A549 (cell line): ENCODE measurements at regions of chr20 and their contacts with region 1.

Region 1: GRCh38 chr20:62808211-62808865 is 3.7 kb downstream of the OGFR start:
- DNase-seq: peak; percentile 65 to 83
- ATAC-seq: peak; percentile 58 to 82; a peak in 4 of 6 replicates
- H3K4me3 ChIP-seq: no peak overlapping the region
- H3K27ac ChIP-seq: no peak overlapping the region
- H3K4me1 ChIP-seq: peaks cover 17% of the 10 kb centered on the region
- CTCF ChIP-seq: peak; percentile 85
- EP300 ChIP-seq: no peak
- POLR2A ChIP-seq: no peak
- RAD21 ChIP-seq: peak; percentile 69 to 73

Region 2: GRCh38 chr20:62668441-62669027 is 139.8 kb before region 1 on chr20:
- CTCF ChIA-PET with region 1: interaction called, 60 read pairs
- POLR2A ChIA-PET with region 1: no interaction called
- DNase-seq: peak; percentile 72 to 91
- ATAC-seq: peak; percentile 79 to 91
- H3K4me3 ChIP-seq: no peak overlapping the region
- H3K27ac ChIP-seq: no peak overlapping the region
- H3K4me1 ChIP-seq: no peaks in the 10 kb centered on the region
- CTCF ChIP-seq: peak; percentile 88
- EP300 ChIP-seq: no peak
- POLR2A ChIP-seq: no peak
- RAD21 ChIP-seq: peak; percentile 93 to 97

Region 3: DNA sequence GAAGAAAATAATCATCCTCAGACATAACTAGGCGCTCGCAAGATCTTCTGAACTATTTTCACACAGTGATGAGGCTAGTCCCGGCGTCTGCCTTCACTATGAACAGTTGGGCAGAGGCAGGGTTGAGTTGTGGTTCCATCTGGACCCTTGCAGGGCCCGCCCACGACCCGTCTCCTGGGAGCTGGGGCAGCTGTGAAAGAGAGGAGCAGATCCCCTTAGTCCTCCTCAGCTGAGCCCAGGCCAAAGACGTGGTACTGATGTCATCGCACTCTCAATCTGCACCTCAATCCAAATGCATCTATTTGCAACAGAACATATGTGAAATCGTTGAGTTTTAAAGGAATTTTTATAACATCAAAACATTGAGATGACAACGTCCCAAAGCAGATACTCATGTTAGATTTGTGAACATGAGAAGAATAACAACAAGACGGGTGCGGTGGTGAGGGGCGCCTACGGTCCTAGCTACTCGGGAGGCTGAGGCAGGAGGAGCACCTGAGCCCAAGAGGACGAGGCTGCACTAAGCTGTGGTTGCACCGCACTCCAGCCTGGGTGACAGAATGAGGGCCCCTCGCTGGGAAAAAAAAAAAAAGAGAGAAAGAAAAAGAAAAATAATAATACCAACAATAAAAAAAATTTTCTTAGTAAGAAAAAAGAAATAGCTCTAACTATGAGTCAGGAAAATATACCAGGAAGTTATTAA is 38.0 kb after region 1 on chr20:
- CTCF ChIA-PET with region 1: interaction called, 17 read pairs
- POLR2A ChIA-PET with region 1: no interaction called
- DNase-seq: no peak
- ATAC-seq: no peak
- H3K4me3 ChIP-seq: no peak overlapping the region
- H3K27ac ChIP-seq: no peak overlapping the region
- H3K4me1 ChIP-seq: no peaks in the 10 kb centered on the region
- CTCF ChIP-seq: no peak
- EP300 ChIP-seq: no peak
- POLR2A ChIP-seq: no peak
- RAD21 ChIP-seq: no peak

Region 4: GRCh38 chr20:63089051-63089891 is 280.9 kb after region 1 on chr20:
- CTCF ChIA-PET with region 1: no interaction called
- POLR2A ChIA-PET with region 1: no interaction called
- DNase-seq: no peak
- ATAC-seq: no peak
- H3K4me3 ChIP-seq: no peak overlapping the region
- H3K27ac ChIP-seq: no peak overlapping the region
- H3K4me1 ChIP-seq: no peaks in the 10 kb centered on the region
- CTCF ChIP-seq: no peak
- EP300 ChIP-seq: no peak
- POLR2A ChIP-seq: no peak
- RAD21 ChIP-seq: no peak